IMR-90 (cell line): ENCODE measurements at regions of chr1 and their contacts with region 1.

Region 1: GRCh38 chr1:200888349-200888838 is 6.3 kb upstream of the INAVA start:
- DNase-seq: no peak
- ATAC-seq: no peak
- H3K4me3 ChIP-seq: no peak overlapping the region
- H3K27ac ChIP-seq: no peak overlapping the region
- H3K4me1 ChIP-seq: peaks cover 3% of the 10 kb centered on the region; the same call in 1 of the 2 replicates
- H3K27me3 ChIP-seq: peaks cover 50% of the 10 kb centered on the region
- CTCF ChIP-seq: no peak
- POLR2A ChIP-seq: no peak
- RAD21 ChIP-seq: no peak

Region 2: GRCh38 chr1:200802865-200803512 is 85.4 kb before region 1 on chr1:
- CTCF ChIA-PET with region 1: no interaction called
- POLR2A ChIA-PET with region 1: no interaction called
- dilution Hi-C with region 1: no loop called
- in situ Hi-C with region 1: no loop called
- intact Hi-C with region 1: no loop called
- DNase-seq: peak; percentile 84
- ATAC-seq: peak; percentile 99
- H3K4me3 ChIP-seq: no peak overlapping the region
- H3K27ac ChIP-seq: no peak overlapping the region
- H3K4me1 ChIP-seq: no peaks in the 10 kb centered on the region
- H3K27me3 ChIP-seq: no peaks in the 10 kb centered on the region
- CTCF ChIP-seq: peak; percentile 89
- POLR2A ChIP-seq: no peak
- RAD21 ChIP-seq: peak; percentile 91

Region 3: GRCh38 chr1:200873116-200873670 is 15.2 kb before region 1 on chr1:
- CTCF ChIA-PET with region 1: no interaction called
- POLR2A ChIA-PET with region 1: no interaction called
- dilution Hi-C with region 1: no loop called
- in situ Hi-C with region 1: no loop called
- intact Hi-C with region 1: no loop called
- DNase-seq: no peak
- ATAC-seq: peak; percentile 44
- H3K4me3 ChIP-seq: no peak overlapping the region
- H3K27ac ChIP-seq: no peak overlapping the region
- H3K4me1 ChIP-seq: peaks cover 6% of the 10 kb centered on the region
- H3K27me3 ChIP-seq: peaks cover 72% of the 10 kb centered on the region
- CTCF ChIP-seq: no peak
- POLR2A ChIP-seq: no peak
- RAD21 ChIP-seq: no peak

Region 4: GRCh38 chr1:201023517-201023902 is 135.1 kb after region 1 on chr1 and contains the start of gene KIF21B:
- CTCF ChIA-PET with region 1: no interaction called
- POLR2A ChIA-PET with region 1: no interaction called
- dilution Hi-C with region 1: no loop called
- in situ Hi-C with region 1: no loop called
- intact Hi-C with region 1: loop called (anchors 10 kb)
- DNase-seq: no peak
- ATAC-seq: peak; percentile 97
- H3K4me3 ChIP-seq: peak within 1 kb of the TSS; percentile 45
- H3K27ac ChIP-seq: no peak within 1 kb of the TSS
- H3K4me1 ChIP-seq: peaks cover 5% of the 10 kb centered on the region
- H3K27me3 ChIP-seq: peaks cover 11% of the 10 kb centered on the region
- CTCF ChIP-seq: no peak
- POLR2A ChIP-seq: no peak
- RAD21 ChIP-seq: no peak
- total RNA-seq, gene KIF21B: 0.36 and 0.56 TPM in 2 replicates